Activated CD8-positive, alpha-beta T cell treated with anti-CD3 and anti-CD28 coated beads, Interleukin-2, amount 10 ng/mL, durations not matched to agents 7 days and 5 days (primary cell): ENCODE measurements at regions of chr16 and their contacts with region 1.

Region 1: DNA sequence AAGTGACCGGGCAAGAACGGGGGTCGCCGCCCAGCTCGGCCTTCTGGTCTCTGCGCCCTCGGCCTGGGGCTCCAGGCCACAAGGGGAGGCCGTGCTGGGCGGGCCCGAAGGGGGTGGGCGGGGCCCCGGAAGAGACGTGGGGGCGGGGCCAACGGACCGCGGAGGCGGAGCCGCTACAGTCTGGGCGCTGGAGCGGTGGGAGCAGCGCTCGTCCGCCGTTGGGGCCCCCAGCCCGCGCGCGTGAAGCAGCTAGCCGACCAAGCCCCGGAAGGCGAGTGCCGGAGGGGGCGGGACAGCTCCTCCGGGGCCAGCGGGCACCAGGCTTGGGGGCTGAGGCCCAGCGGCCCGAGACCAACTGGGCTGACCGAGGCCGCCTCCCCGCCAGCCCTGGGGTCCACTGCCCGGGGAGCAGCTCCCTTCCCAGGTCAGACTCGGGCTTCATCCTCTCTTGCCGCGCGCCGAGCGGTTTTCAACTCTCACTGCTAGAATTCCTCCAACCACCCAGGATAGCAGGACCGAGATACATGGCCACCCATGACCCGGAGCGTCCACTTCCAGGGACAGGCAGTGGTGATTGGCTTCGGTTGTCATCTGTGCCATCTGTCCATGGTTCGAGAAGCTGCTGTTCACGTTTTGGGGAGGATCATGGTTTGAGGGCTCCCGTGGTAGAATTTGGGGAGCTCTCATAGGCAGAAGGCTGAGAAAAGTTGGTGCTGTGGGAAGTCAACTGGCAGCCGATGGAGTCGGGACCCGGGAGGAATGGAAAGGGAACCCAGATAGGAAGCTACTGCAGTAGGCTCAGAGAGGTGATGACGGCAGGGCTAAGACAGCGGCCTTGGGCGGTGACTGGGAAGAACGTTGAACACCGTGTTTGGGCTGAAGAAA is 44.6 kb upstream of the LCMT1 start:
- DNase-seq: peak; percentile 90
- ATAC-seq: peak; percentile 96
- H3K4me3 Mint-ChIP-seq: peak overlapping the region; percentile 84
- H3K27ac Mint-ChIP-seq: peak overlapping the region; percentile 87
- H3K4me1 Mint-ChIP-seq: peaks cover 49% of the 10 kb centered on the region
- H3K27me3 Mint-ChIP-seq: no peaks in the 10 kb centered on the region

Region 2: DNA sequence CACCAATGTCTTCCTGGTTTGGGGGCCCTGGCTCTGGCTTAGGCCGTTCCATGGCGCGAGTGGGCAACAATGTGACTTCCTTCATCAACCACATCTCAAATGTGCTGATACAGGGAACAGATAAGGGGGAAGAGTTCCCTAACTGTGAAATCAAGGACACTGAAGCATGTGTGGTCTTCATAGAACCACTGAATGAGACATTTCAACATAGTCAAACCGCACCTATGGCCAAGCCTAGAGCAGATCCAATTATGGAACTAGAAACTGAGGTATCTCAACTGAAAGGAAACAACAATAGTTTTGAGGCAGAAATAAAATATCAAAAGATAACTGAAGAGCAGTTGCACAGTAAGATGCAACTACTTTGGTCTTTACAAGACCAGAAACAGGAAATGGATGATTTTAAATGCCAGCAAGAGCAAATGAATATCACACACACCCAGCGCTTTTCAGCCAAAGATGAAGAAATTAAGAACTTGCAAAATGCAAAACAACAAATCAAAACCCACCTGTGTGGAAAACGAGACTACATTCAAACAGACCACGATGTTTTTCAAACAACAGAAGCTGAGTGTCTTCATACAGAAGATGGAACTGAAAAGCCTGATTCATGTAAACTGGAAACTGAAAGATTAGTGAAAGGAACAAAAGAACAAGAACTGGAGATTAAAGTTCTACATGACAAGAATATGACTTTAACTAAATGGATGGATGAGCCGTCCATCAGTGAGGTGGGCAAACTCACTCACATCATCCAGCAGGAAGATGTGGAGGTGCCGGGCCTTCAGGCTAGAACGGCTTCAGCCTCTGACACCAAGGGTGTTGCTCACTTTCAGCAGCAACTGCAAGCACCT is 26.4 kb after region 1 on chr16:
- CTCF ChIA-PET with region 1: interaction called, 5 read pairs
- POLR2A ChIA-PET with region 1: interaction called, 18 read pairs
- DNase-seq: peak; percentile 25
- ATAC-seq: peak; percentile 70
- H3K4me3 Mint-ChIP-seq: peak overlapping the region; percentile 6
- H3K27ac Mint-ChIP-seq: peak overlapping the region; percentile 83
- H3K4me1 Mint-ChIP-seq: peaks cover 22% of the 10 kb centered on the region
- H3K27me3 Mint-ChIP-seq: no peaks in the 10 kb centered on the region